ENCODE measurements at regions of chr10 and their contacts with region 1.

Region 1: GRCh38 chr10:86585037-86585725 is 63.6 kb upstream of the WAPL start:
- DNase-seq: peak; percentile 86
- H3K4me3 ChIP-seq: no peak overlapping the region
- H3K27ac ChIP-seq: no peak overlapping the region
- H3K4me1 ChIP-seq: peaks cover 30% of the 10 kb centered on the region
- CTCF ChIP-seq: peak; percentile 98

Region 2: DNA sequence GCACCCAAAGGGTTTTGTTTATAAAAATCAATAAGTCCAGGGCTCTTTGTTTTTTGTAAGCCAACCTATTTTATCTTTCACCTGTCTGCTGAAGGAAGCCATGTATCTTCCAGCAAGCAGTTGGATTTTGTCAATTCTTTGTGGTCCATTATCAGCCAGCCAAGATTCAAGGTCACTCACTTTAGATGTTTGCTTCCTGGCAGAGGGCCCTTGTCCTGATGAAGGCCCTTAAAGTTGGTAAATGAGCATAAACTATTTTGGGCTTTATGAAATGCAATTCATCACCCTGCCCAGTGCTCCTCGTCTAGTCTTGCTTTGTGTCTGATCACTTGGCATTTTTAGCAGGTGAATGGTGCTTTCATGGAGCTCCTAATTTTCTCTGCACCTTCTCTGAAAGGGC is 1222.8 kb before region 1 on chr10:
- CTCF ChIA-PET with region 1: no interaction called
- POLR2A ChIA-PET with region 1: no interaction called
- intact Hi-C with region 1: no loop called
- DNase-seq: no peak
- H3K4me3 ChIP-seq: no peak overlapping the region
- H3K27ac ChIP-seq: no peak overlapping the region
- H3K4me1 ChIP-seq: no peaks in the 10 kb centered on the region
- CTCF ChIP-seq: no peak

Region 3: GRCh38 chr10:85761906-85762445 is 823.2 kb before region 1 on chr10:
- CTCF ChIA-PET with region 1: no interaction called
- POLR2A ChIA-PET with region 1: no interaction called
- intact Hi-C with region 1: no loop called
- DNase-seq: no peak
- H3K4me3 ChIP-seq: no peak overlapping the region
- H3K27ac ChIP-seq: no peak overlapping the region
- H3K4me1 ChIP-seq: no peaks in the 10 kb centered on the region
- CTCF ChIP-seq: no peak

Region 4: DNA sequence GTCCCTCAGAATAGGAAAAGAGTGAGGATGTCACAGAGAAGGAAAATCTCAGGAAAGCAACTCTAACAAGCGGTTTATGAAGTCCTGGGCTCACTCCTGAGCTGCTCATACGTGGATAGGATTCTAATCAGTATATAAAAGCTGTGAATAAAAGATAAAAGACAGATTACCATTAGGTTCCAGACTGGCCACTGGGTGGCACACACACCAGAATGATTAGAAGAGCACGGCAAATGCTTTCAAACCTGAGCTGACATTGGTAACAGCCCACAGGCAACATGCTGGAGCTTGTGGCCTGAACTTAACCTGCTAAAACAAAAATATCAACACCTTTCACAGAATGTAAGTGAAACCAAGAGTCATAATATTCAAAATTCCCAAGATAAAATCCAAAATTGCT is 589.4 kb before region 1 on chr10:
- CTCF ChIA-PET with region 1: no interaction called
- POLR2A ChIA-PET with region 1: no interaction called
- intact Hi-C with region 1: loop called (anchors 10 kb)
- DNase-seq: peak; percentile 50
- H3K4me3 ChIP-seq: no peak overlapping the region
- H3K27ac ChIP-seq: no peak overlapping the region
- H3K4me1 ChIP-seq: no peaks in the 10 kb centered on the region
- CTCF ChIP-seq: peak; percentile 81

Region 5: GRCh38 chr10:86261941-86262687 is 323.1 kb before region 1 on chr10:
- CTCF ChIA-PET with region 1: interaction called, 3 read pairs
- POLR2A ChIA-PET with region 1: no interaction called
- intact Hi-C with region 1: loop called (anchors 1 kb)
- DNase-seq: peak; percentile 76
- H3K4me3 ChIP-seq: no peak overlapping the region
- H3K27ac ChIP-seq: no peak overlapping the region
- H3K4me1 ChIP-seq: no peaks in the 10 kb centered on the region
- CTCF ChIP-seq: peak; percentile 78

Region 6: DNA sequence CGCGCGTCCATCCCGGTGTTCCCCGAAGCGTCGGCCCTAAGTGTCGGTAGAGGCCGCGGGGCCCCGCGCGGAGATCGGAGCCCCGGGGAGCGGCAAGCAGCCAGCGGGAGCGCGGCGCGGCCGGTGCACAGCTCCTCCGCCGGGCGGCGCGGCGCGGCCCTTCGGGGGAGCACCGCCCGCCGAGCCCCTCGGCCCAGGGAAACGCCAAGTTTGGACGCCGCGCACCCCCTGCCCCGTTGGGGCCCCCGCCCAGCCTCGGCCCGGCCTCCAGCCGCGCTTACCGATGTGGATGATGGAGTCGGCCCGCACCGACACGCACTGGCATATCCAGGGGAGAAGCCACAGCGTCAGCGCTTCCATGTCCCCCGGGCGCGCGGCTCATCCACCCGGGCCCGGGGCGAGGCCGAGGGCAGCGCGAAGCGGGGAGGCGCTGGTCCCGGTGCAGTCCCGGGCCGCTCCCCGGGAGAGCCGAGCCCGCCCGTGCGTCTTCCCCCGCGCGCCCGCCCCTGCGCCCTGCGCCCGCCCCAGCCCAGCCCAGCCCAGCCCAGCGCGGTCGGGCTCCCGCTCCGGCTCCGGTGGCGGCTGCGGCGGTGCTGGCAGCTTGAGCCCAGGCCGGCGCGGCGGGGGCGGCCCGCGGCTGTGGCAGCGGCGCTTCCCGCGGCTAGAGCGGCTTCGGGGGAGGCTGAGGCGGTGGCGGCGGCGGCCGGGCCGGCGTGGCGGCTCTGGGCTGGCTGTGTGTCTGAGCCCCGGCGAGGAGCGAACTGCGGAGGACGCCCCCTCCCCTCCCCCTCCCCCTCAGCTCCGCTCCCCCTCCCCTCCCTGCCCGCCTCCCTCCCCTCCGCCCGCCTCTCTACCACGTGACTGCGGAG is 218.9 kb before region 1 on chr10 and contains the start of gene GRID1:
- CTCF ChIA-PET with region 1: no interaction called
- POLR2A ChIA-PET with region 1: no interaction called
- intact Hi-C with region 1: loop called (anchors 2 kb)
- DNase-seq: peak; percentile 55
- H3K4me3 ChIP-seq: peak within 1 kb of the TSS; percentile 62
- H3K27ac ChIP-seq: no peak within 1 kb of the TSS
- H3K4me1 ChIP-seq: peaks cover 3% of the 10 kb centered on the region
- CTCF ChIP-seq: peak; percentile 35; the same call in 1 of the 2 replicates
- total RNA-seq, gene GRID1: 0.75 and 1.6 TPM in 2 replicates

Region 7: DNA sequence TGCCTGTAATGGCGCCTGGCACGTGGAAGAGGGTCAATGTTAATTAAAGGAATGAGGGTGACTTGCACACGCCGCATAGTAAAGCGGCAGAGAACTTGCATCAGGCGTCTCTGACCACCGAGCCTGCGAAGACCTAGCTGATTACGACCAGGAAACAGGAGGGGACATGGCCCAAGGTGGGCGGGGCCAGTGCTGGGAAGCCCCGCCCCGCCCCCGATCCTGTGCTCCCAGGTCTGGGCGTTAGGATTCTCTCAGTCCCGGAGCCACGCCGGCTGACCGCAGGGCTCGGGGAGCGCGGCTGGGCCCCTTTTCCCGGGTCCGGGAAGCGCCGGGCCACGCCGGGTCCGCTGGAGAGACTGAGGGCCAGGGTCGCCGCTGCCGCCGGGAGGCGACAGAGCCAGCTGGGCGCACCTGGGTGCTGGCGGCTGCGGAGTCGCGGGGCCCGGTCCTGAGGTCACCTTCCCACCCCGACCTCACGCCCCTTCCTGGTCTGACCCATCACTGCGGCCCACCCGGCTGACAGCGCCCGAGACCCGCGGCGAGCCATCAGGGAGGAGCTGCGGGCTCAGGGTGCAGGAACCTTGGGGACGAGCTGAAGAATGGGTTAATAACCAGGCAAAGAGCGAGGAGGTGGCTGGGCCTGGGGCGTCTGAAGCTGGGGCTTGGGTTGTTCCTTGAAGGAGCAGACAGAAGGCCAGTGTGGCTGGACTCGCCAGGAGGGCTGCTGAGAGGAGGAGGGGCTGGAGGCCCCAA is 195.6 kb before region 1 on chr10:
- CTCF ChIA-PET with region 1: interaction called, 6 read pairs
- POLR2A ChIA-PET with region 1: interaction called, 14 read pairs
- intact Hi-C with region 1: no loop called
- DNase-seq: peak; percentile 85
- H3K4me3 ChIP-seq: peak overlapping the region; percentile 76
- H3K27ac ChIP-seq: peak overlapping the region; percentile 95
- H3K4me1 ChIP-seq: peaks cover 60% of the 10 kb centered on the region
- CTCF ChIP-seq: peak; percentile 61

Region 8: GRCh38 chr10:86411281-86411841 is 173.8 kb before region 1 on chr10:
- CTCF ChIA-PET with region 1: interaction called, 3 read pairs
- POLR2A ChIA-PET with region 1: interaction called, 17 read pairs
- intact Hi-C with region 1: no loop called
- DNase-seq: peak; percentile 91
- H3K4me3 ChIP-seq: peak overlapping the region; percentile 53
- H3K27ac ChIP-seq: peak overlapping the region; percentile 95
- H3K4me1 ChIP-seq: peaks cover 69% of the 10 kb centered on the region
- CTCF ChIP-seq: no peak

Measured in OCI-LY7 (cell line).